Colonic mucosa (tissue), 4 donors: ENCODE measurements at regions of chr22 and their contacts with region 1.

Region 1: GRCh38 chr22:22397277-22397870 is 111.2 kb downstream of the ZNF280B start:
- DNase-seq: no peak
- H3K4me3 ChIP-seq: no peak overlapping the region
- H3K27ac ChIP-seq: no peak overlapping the region
- H3K4me1 ChIP-seq: no peaks in the 10 kb centered on the region
- H3K27me3 ChIP-seq: no peaks in the 10 kb centered on the region
- CTCF ChIP-seq: no peak

Region 2: DNA sequence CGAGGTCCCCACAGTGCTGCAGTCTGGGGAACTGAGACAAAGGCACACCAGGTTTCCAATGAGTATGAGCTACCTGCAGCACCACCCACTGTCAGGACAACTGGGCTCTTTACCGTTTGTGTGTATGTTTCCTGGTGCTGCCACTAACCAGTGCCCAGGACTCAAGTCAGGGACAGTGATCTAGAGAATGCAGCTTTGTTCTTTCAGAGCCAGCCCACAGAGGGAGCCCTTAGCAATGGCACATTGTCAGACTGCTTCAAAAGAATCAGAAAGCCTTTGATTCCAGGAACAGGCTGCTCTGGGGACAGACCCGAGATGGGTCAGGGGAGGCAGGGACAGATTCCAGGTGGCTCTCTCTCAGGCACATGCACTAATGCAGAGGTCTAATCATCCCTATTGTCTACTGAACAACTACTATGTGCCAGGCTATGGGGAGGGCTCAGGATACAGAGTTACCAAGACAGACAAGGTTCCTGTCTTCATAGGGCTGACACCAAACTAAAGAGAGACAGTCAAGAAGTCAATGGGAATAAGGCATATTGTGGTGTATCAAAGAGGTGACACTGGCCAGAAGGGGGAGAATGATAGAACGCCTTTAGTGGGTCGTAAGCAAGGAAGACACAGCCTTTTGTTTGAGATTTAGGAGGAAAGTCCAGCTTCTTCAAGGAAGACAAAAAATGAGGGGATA is 49.1 kb before region 1 on chr22:
- intact Hi-C with region 1: loop called (anchors 2 kb)
- DNase-seq: no peak
- H3K4me3 ChIP-seq: no peak overlapping the region
- H3K27ac ChIP-seq: no peak overlapping the region
- H3K4me1 ChIP-seq: no peaks in the 10 kb centered on the region
- H3K27me3 ChIP-seq: no peaks in the 10 kb centered on the region
- CTCF ChIP-seq: no peak

Region 3: DNA sequence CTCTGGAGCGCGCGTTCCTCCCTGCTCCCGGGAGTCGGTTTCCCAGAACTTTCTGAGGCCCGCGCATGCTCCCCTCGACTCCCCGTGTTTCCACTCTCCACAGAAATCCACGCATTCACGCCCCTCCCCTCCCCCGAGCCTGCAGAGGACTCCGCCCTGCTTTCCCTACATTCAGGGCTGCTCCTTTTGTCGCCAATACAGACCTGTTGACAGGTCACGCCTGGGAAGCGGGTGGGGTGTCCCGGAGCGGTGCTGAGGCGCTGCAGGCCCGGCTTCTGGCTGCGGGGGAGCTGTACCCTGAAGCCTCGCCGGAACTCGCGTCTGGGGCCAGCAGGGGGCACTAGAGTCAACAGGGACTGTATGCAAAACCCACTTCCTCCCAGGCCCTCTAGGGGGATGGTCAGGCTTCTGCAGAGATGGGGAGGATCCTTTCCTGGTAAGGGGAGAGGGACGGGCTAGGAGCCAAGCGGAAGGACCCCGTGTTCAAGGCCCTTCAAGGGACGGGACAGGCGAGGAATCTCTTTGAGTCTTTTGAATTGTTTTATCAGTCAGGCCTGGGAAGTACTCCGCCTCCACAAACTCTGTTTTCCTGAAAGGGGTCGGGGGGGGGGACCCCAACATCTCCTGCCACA is 161.7 kb after region 1 on chr22 and contains the start of gene PRAME:
- intact Hi-C with region 1: no loop called
- DNase-seq: peak; percentile 72
- H3K4me3 ChIP-seq: no peak within 1 kb of the TSS
- H3K27ac ChIP-seq: no peak within 1 kb of the TSS
- H3K4me1 ChIP-seq: no peaks in the 10 kb centered on the region
- H3K27me3 ChIP-seq: no peaks in the 10 kb centered on the region
- CTCF ChIP-seq: peak; percentile 54
- total RNA-seq, gene PRAME: 2.8 TPM in 1 of 2 donors, not detected in the other

Region 4: DNA sequence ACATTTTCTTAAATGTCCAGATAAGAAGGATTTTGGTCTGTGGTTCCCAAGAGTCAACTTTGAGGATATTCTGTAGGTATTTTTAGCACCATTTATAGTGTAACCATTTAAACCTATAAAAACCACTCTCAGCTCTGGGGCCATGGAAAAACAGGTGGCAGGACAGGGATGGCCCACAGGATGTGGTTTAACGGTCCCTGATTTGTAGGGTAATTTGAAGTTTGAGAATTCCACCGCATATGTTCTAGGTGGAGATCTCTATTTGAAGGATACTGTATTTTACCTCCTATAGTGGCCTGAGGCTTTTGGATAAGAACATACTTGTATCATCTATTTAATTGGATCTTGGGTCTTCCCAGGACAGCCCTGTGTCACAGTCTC is 427.8 kb after region 1 on chr22:
- intact Hi-C with region 1: no loop called
- DNase-seq: no peak
- H3K4me3 ChIP-seq: no peak overlapping the region
- H3K27ac ChIP-seq: no peak overlapping the region
- H3K4me1 ChIP-seq: no peaks in the 10 kb centered on the region
- H3K27me3 ChIP-seq: no peaks in the 10 kb centered on the region
- CTCF ChIP-seq: no peak